Activated T-helper 2 cell treated with anti-CD3 and anti-CD28 coated beads, Interferon-gamma antibody, Interleukin-2, Interleukin-4, amounts not matched to agents 10 μg/mL and 5 μg/mL and 100 μg/mL, durations not matched to agents 14 hours and 24 hours and 36 hours (primary cell): ENCODE measurements at regions of chr12 and their contacts with region 1.

Region 1: DNA sequence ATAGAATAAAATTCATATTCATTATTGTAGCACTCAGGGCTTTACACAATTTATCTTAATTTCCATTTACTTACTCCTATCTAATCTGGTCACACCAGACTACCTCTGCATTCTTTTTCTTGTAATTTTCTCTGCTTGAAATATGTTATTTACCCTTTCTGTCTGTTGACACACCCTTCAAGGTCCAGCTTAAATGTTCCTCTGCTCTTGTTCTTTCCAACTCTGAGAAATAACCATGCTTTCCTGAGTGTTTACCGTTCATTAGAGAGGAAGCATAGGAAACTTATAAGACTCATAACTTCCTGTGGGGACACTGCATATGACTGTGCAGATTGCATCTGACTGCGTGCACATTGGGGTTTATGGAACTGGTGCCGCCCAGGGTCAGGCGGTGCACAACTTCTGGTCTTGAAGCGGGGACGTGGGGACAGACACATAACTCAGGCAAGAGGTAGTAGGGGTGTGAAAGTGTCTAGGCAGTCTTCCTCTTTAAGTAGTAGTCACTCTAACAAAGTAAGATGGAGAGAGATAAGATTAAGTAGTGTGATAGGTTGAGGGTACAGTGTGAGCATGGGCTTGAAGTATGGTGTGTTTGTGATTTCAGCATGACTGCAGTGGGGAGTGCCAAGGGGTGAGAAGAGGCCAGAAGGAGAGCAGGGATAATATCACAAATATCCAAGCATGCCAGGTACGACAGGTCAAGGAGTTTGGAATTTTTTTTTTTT is 42.5 kb upstream of the FOXJ2 start:
- DNase-seq: peak; percentile 83
- H3K4me3 Mint-ChIP-seq: peak overlapping the region; percentile 68
- H3K27ac Mint-ChIP-seq: peak overlapping the region; percentile 86
- H3K4me1 Mint-ChIP-seq: peaks cover 35% of the 10 kb centered on the region
- H3K27me3 Mint-ChIP-seq: no peaks in the 10 kb centered on the region

Region 2: DNA sequence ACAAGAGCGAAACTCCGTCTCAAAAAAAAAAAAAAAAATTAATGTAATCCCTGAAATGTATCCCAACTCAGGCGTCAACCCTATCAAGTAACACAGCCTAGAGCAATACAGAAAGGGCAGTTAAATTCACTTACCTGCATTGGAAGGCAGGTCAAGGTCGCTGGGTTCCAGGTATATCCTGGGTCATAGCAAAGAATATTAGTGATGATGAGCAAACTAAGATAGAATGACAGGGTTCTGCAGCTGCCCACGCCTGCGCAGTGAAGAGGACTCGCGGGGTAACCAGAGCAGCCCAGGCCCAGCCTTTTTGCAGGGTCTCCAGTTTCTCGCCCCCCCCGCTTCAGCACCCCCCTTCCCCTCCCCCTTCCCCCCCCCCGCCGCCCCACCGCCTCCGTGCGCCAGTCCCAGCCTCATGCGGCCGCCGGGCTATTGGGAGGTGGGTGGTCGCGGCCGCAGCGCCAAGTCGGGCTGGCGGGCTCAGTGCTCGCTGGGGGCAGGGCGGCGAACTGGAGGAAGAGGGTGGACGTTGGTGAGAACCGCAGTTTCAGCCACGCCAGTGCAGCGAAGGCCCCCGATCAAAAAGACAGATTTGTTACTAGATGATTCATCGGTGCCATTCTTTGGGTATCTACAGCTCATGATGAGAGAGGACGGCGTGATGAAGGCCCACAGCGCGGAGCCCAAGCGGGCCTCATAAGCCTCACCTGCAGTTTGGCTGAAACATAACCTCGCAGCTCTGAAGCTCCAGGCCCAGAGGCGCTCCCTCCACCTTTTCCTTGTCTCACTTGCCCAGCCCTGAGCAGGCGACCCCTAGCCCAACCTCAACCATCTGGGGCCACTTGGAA is 74.2 kb before region 1 on chr12:
- intact Hi-C with region 1: loop called (anchors 1 kb)
- DNase-seq: no peak
- H3K4me3 Mint-ChIP-seq: no peak overlapping the region
- H3K27ac Mint-ChIP-seq: no peak overlapping the region
- H3K4me1 Mint-ChIP-seq: peaks cover 11% of the 10 kb centered on the region
- H3K27me3 Mint-ChIP-seq: no peaks in the 10 kb centered on the region

Region 3: GRCh38 chr12:7959701-7960121 is 30.3 kb before region 1 on chr12:
- intact Hi-C with region 1: loop called (anchors 1 kb)
- DNase-seq: peak; percentile 57
- H3K4me3 Mint-ChIP-seq: peak overlapping the region; percentile 93
- H3K27ac Mint-ChIP-seq: peak overlapping the region; percentile 93
- H3K4me1 Mint-ChIP-seq: peaks cover 37% of the 10 kb centered on the region
- H3K27me3 Mint-ChIP-seq: no peaks in the 10 kb centered on the region

Region 4: GRCh38 chr12:7970475-7971252 is 19.3 kb before region 1 on chr12:
- intact Hi-C with region 1: loop called (anchors 1 kb)
- DNase-seq: peak; percentile 85
- H3K4me3 Mint-ChIP-seq: peak overlapping the region; percentile 96
- H3K27ac Mint-ChIP-seq: peak overlapping the region; percentile 100
- H3K4me1 Mint-ChIP-seq: peaks cover 27% of the 10 kb centered on the region
- H3K27me3 Mint-ChIP-seq: no peaks in the 10 kb centered on the region

Region 5: DNA sequence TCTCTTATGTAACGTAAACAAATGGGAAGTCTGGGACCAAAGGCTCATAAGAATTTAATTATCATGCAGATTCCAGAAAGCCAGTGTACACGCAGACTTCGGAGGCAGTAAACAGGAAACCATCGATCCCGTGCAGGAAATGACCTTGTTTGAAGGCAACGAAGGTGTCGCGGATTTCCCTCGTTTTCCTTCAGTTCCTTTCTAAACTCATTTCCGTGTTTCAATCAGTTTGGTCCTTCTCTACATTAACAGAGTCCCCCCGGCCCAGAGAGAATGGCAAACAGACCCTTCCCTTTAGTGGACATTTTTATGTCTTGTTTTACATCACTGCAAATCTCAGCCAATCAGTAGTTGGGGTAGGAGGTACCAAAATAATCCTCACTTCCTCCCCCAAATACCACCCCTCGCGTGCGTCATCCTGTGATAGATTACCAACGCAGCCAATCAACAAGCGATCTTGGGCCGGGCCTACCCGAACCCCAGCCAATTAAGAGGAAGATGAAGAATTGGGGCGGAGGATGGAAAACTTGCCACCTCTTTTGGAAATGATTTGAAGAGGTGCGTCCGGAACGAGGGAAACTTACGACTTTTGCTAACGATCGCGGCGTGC is 36.4 kb after region 1 on chr12:
- intact Hi-C with region 1: loop called (anchors 1 kb)
- DNase-seq: peak; percentile 97
- H3K4me3 Mint-ChIP-seq: peak overlapping the region; percentile 85
- H3K27ac Mint-ChIP-seq: peak overlapping the region; percentile 99
- H3K4me1 Mint-ChIP-seq: peaks cover 7% of the 10 kb centered on the region
- H3K27me3 Mint-ChIP-seq: no peaks in the 10 kb centered on the region

Region 6: GRCh38 chr12:8065991-8066594 is 76.1 kb after region 1 on chr12 and contains the start of gene C3AR1:
- intact Hi-C with region 1: no loop called
- DNase-seq: peak; percentile 37
- H3K4me3 Mint-ChIP-seq: peak within 1 kb of the TSS; percentile 37
- H3K27ac Mint-ChIP-seq: peak within 1 kb of the TSS; percentile 62
- H3K4me1 Mint-ChIP-seq: peaks cover 32% of the 10 kb centered on the region
- H3K27me3 Mint-ChIP-seq: no peaks in the 10 kb centered on the region
- total RNA-seq, gene C3AR1: 0.50 and 0.62 TPM in 2 replicates

Region 7: GRCh38 chr12:8096281-8096915 is 106.4 kb after region 1 on chr12:
- intact Hi-C with region 1: no loop called
- DNase-seq: no peak
- H3K4me3 Mint-ChIP-seq: no peak overlapping the region
- H3K27ac Mint-ChIP-seq: no peak overlapping the region
- H3K4me1 Mint-ChIP-seq: peaks cover 20% of the 10 kb centered on the region
- H3K27me3 Mint-ChIP-seq: no peaks in the 10 kb centered on the region

Region 8: GRCh38 chr12:8108808-8109398 is 118.9 kb after region 1 on chr12:
- intact Hi-C with region 1: no loop called
- DNase-seq: peak; percentile 66
- H3K4me3 Mint-ChIP-seq: no peak overlapping the region
- H3K27ac Mint-ChIP-seq: no peak overlapping the region
- H3K4me1 Mint-ChIP-seq: peaks cover 9% of the 10 kb centered on the region
- H3K27me3 Mint-ChIP-seq: no peaks in the 10 kb centered on the region

Region 9: GRCh38 chr12:8449293-8449945 is 459.4 kb after region 1 on chr12:
- intact Hi-C with region 1: no loop called
- DNase-seq: no peak
- H3K4me3 Mint-ChIP-seq: no peak overlapping the region
- H3K27ac Mint-ChIP-seq: no peak overlapping the region
- H3K4me1 Mint-ChIP-seq: no peaks in the 10 kb centered on the region
- H3K27me3 Mint-ChIP-seq: peaks cover 9% of the 10 kb centered on the region